ENCODE measurements at regions of chr3 and their contacts with region 1.

Region 1: DNA sequence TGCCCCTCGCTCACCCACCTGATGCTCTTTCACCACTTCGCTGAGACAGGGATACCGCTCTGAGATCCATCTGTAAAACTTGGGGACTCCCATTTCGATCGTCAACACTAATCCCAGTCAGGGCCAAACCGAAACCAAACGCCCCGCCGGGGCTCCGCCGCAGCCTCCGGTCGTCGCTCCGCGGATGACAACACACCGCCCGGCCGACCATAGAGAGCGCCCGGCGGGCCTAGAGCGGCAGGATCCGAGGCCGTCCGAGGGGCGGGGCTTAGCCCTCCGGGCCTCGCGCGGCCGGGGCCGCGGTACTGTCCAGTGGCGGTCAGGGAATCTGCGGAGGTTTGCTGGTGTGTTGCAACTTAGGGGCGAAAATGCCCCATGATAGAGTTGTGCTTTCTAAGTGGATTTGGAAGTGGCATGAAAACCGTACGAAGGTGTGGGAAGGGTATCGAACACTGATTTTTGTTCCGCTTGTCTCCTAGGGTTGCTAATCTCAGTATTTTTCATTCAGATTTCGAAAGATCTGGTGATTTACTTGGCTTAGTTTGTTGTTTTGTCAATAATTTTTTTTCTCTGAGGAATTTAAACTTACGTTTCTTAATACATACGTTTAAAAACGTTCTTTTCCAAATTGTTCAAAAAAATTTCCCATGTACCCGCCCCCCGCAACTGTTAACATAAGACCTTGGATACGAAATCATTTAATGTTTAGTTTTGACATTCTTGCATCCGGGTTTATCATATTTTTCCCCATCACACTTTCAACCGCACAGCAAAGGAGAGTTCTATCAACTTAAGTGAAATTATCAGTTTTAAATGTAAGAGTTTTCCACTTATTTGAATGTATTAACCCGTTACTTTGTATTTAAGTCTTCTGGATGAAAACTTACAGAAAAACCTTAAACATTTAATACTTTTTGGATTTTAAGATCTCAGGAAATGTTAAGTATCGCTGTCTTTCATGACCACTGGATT is at the start of gene XRN1:
- DNase-seq: peak; percentile 98
- ATAC-seq: peak; percentile 85
- H3K4me3 Mint-ChIP-seq: peak within 1 kb of the TSS; percentile 95
- H3K27ac Mint-ChIP-seq: peak within 1 kb of the TSS; percentile 98
- H3K4me1 Mint-ChIP-seq: peaks cover 32% of the 10 kb centered on the region
- H3K27me3 Mint-ChIP-seq: no peaks in the 10 kb centered on the region
- total RNA-seq, gene XRN1: 54.2 to 117 TPM

Region 2: DNA sequence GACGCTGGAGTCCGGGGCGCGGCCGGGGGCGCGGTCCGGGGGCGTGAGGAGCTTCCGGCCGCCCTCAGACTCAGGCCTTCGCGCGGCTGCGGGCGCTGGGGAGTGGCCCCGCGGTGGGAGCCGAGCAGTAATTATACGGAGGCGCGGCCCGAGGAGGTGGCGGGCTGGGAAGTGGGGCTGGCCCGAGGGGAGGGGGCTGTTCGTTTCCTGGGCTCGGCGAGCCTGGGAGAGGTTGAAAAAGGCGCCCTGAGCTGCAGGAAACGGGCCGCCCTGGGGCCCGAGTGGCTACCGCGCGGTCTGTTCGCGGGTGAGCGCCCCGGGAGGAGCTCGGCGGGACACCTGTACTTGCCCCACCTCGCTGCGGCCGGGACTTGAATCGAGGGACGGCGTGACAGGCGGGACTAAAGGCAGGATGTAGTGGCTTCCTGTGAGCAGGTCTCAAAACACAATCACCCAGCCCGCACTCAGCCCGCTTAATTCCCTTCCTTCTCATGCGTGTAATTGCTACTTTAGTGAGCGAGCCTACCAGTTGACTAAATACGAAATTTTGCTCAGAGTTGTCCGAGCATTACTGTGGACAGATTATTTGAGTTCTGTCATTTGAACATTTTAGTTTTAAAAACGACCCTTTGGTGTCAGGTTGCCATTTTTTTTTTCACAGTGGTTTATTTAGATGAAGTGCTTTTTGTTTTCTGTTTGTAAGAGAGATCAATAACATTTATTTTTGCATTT is 960.5 kb before region 1 on chr3:
- CTCF ChIA-PET with region 1: no interaction called
- POLR2A ChIA-PET with region 1: no interaction called
- intact Hi-C with region 1: loop called in 1 of 2 experiments (anchors 10 kb)
- DNase-seq: peak; percentile 93
- ATAC-seq: peak; percentile 69
- H3K4me3 Mint-ChIP-seq: peak overlapping the region; percentile 77
- H3K27ac Mint-ChIP-seq: peak overlapping the region; percentile 94
- H3K4me1 Mint-ChIP-seq: peaks cover 64% of the 10 kb centered on the region
- H3K27me3 Mint-ChIP-seq: no peaks in the 10 kb centered on the region

Region 3: DNA sequence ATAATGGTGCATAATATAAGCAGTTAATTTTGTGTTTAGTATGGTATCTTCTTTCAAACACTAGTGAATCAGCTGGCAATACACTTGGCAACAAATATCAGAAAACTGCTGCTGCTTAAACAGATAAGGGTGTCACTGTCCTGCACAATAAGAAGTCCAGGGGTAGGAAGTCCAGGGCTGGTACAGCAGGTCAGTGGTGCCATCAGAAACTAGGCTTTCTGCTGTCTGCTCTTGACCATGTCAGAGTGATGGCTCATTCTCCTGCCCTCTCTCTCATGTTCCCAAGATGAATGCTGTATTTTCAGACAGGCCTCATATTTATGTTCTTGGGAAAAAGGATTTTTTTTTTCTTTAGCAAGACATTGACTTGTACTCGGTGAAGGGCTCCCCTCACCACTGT is 694.1 kb before region 1 on chr3:
- CTCF ChIA-PET with region 1: no interaction called
- POLR2A ChIA-PET with region 1: no interaction called
- intact Hi-C with region 1: no loop called
- DNase-seq: no peak
- ATAC-seq: no peak
- H3K4me3 Mint-ChIP-seq: no peak overlapping the region
- H3K27ac Mint-ChIP-seq: no peak overlapping the region
- H3K4me1 Mint-ChIP-seq: no peaks in the 10 kb centered on the region
- H3K27me3 Mint-ChIP-seq: no peaks in the 10 kb centered on the region

Region 4: DNA sequence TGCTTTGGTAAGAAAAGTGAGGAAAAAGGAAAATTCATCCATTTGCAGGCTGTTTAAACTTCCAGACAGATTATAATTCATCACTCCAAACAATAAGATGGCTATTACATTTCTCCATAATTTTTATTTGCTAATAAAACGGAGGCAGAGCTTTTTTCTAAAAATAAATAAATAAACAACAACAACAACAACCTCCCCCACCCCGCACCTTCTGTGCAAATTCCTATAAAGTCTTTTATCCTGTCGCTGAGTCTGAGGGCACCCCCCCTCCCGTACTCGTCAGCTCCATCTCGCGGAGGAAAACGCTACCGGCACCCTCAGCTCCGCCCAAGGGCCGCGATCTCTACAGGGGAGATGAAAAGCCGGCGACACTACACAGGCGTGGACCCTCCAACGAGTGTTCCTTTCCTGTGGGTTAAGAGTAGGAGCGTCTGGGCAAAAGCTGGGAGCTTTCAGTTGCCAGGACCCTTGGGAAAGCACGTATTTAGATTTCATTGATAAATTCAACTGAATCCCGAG is 572.7 kb before region 1 on chr3:
- CTCF ChIA-PET with region 1: interaction called, 3 read pairs
- POLR2A ChIA-PET with region 1: no interaction called
- intact Hi-C with region 1: loop called in 1 of 2 experiments (anchors 5 kb)
- DNase-seq: peak; percentile 92
- ATAC-seq: peak; percentile 73
- H3K4me3 Mint-ChIP-seq: peak overlapping the region; percentile 93
- H3K27ac Mint-ChIP-seq: peak overlapping the region; percentile 91
- H3K4me1 Mint-ChIP-seq: peaks cover 23% of the 10 kb centered on the region
- H3K27me3 Mint-ChIP-seq: no peaks in the 10 kb centered on the region

Region 5: GRCh38 chr3:142315083-142315482 is 133.1 kb before region 1 on chr3:
- CTCF ChIA-PET with region 1: no interaction called
- POLR2A ChIA-PET with region 1: no interaction called
- intact Hi-C with region 1: no loop called
- DNase-seq: no peak
- ATAC-seq: no peak
- H3K4me3 Mint-ChIP-seq: no peak overlapping the region
- H3K27ac Mint-ChIP-seq: no peak overlapping the region
- H3K4me1 Mint-ChIP-seq: peaks cover under 1% of the 10 kb centered on the region
- H3K27me3 Mint-ChIP-seq: no peaks in the 10 kb centered on the region

Region 6: DNA sequence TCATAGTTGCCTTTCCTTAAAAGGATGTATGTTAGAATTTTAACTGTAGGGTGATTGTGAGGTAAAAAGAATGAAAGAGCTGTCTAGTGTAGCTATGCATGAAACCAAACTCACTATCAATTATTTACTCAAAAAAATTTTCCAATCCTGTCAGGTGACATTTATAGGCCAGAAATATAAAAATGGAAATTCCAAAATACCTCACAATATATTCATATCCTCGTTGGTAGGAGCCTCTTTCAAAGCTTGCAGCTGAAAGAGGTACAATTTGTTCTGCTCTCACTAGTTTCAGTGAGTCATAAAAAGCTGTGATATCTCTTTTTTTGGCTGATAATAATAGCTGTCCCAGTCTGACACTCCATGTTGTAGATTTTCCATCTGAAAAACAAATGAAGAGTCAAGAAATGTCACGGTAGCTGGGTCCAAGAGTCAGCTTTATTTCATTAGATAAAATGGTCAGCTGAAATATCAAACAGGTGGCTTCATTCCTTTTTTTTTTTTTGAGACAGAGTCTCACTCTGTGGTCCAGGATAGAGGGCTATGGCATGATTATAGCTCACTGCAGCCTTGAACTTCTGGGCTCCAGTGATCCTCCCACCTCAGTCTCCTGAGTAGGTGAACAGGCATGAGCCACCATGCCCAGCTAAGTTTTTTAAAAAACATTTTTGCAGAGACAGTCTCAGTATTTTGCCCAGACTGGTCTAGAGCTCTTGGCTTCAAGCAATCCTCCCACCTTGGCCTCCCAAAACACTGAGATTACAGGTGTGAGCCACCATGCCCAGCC is 50.5 kb after region 1 on chr3:
- CTCF ChIA-PET with region 1: no interaction called
- POLR2A ChIA-PET with region 1: no interaction called
- intact Hi-C with region 1: loop called in 1 of 2 experiments (anchors 2 kb)
- DNase-seq: no peak
- ATAC-seq: peak; percentile 90
- H3K4me3 Mint-ChIP-seq: no peak overlapping the region
- H3K27ac Mint-ChIP-seq: peak overlapping the region; percentile 62
- H3K4me1 Mint-ChIP-seq: peaks cover 16% of the 10 kb centered on the region
- H3K27me3 Mint-ChIP-seq: no peaks in the 10 kb centered on the region

Region 7: DNA sequence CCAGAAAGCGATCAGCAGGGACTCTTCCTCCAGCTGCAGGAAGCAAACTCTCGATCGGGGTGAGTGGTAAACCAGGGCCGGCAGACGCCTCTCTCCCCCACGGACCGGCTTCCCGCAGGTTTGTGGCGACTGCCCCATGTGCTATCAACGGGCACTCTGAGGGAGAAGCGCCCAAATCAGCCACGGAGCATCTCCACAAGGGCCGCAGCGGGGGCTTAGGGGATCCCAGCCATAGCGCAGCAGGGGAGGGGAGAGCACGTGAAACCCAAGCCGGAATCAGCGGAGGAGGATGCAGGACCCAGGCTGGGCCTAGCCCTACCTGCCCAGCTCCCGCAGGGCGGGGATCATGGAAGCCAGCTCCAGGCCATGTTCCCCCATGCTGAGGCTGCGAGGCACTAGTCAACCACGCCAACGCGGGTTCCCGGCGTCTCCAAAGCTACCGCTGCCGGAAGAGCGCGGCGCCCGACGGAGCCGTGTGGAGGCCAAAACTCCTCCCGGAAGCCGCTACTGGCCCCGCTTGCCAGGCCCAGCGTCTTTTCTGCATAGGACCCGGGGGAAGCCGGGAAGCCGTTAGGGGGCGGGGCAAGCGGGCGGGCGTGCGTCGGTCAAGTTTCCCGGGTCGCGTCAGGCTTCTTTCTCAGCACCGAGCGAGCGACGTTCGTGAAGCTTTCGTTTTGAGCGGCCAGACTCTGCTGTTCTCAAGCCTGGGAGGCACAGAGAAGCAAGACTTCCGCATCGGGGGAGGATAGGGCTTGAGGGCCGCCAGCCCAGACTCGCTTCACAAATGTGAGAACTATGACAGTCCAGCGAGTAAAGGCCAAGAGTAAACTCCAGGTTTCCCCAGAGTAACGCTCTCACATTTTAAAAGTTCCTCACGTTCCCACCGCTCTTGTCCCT is 130.4 kb after region 1 on chr3 and contains the start of gene ATR:
- CTCF ChIA-PET with region 1: no interaction called
- POLR2A ChIA-PET with region 1: interaction called, 3 read pairs
- intact Hi-C with region 1: loop called (anchors 1 kb)
- DNase-seq: peak; percentile 98
- ATAC-seq: peak; percentile 96
- H3K4me3 Mint-ChIP-seq: peak within 1 kb of the TSS; percentile 97
- H3K27ac Mint-ChIP-seq: peak within 1 kb of the TSS; percentile 99
- H3K4me1 Mint-ChIP-seq: peaks cover 43% of the 10 kb centered on the region
- H3K27me3 Mint-ChIP-seq: no peaks in the 10 kb centered on the region
- total RNA-seq, gene ATR: 36.1 to 39.9 TPM

Region 8: DNA sequence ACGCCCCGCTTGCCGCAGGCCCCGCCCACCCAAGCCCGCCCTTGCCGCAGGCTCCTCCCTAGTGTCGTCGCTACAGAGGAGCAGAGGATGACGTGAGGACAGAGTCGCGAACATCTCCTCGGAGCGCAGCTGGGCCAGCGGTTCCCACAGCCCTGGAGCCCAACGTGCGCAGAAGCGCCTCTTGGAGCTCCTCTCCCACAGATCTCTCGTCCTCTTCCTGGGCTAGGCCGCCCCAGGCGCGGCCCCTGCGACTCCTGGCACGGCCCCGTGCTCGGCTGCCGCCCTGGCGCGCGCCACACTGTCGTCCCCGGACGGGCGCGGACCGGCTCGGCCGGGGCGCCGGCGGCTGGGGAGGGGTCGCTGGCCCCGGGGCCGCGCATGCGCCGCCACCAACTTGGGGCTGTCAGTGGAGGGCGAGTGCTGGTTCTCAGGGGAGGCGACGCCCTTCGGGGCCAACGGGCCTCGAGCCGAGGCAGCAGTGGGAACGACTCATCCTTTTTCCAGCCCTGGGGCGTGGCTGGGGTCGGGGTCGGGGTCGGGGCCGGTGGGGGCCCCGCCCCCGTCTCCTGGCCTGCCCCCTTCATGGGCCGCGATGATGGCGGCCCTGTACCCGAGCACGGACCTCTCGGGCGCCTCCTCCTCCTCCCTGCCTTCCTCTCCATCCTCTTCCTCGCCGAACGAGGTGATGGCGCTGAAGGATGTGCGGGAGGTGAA is 276.0 kb after region 1 on chr3 and contains the start of gene TRPC1:
- CTCF ChIA-PET with region 1: no interaction called
- POLR2A ChIA-PET with region 1: no interaction called
- intact Hi-C with region 1: loop called in 1 of 2 experiments (anchors 1 kb)
- DNase-seq: peak; percentile 87
- ATAC-seq: peak; percentile 95
- H3K4me3 Mint-ChIP-seq: peak within 1 kb of the TSS; percentile 82
- H3K27ac Mint-ChIP-seq: peak within 1 kb of the TSS; percentile 87
- H3K4me1 Mint-ChIP-seq: peaks cover 11% of the 10 kb centered on the region
- H3K27me3 Mint-ChIP-seq: peaks cover 37% of the 10 kb centered on the region
- total RNA-seq, gene TRPC1: 4.7 to 6.2 TPM

Region 9: DNA sequence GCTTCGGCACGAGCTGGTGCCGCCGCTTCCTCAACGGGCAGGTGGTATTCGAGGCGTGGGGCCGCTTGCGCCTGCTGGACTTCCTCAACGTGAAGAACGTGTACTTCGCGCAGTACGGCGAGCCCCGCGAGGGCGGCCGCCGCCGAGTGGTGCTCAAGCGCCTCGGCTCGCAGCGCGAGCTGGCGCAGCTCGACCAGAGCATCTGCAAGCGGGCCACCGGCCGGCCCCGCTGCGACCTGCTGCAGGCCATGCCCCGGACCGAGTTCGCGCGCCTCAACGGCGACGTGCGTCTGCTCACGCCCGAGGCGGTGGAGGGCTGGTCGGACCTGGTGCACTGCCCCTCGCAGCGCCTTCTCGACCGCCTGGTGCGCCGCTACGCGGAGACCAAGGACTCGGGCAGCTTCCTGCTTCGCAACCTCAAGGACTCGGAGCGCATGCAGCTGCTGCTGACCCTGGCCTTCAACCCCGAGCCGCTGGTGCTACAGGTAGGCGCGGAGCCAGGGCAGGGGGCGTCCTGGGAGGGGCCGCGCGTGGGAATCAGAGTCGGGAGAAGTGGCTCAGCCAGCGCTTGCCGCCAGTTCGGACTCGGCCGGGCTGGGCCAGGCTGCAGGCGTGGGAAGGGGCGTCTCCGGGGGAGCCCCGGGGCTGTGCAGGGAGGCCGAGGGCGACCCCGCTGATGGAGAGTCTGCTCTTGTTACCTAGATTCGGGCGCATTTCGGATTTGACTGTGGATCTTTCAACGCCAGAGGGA is 1524.5 kb after region 1 on chr3:
- CTCF ChIA-PET with region 1: no interaction called
- POLR2A ChIA-PET with region 1: no interaction called
- intact Hi-C with region 1: loop called in 1 of 2 experiments (anchors 5 kb)
- DNase-seq: peak; percentile 78
- ATAC-seq: peak; percentile 11
- H3K4me3 Mint-ChIP-seq: peak overlapping the region; percentile 96
- H3K27ac Mint-ChIP-seq: peak overlapping the region; percentile 87
- H3K4me1 Mint-ChIP-seq: peaks cover 29% of the 10 kb centered on the region
- H3K27me3 Mint-ChIP-seq: peaks cover 4% of the 10 kb centered on the region

Measured in activated CD4-positive, alpha-beta T cell treated with anti-CD3 and anti-CD28 coated beads for 36 hours (primary cell).